ENCODE measurements at regions of chr6 and their contacts with region 1.

Region 1: GRCh38 chr6:129849456-129849855 is 11.7 kb downstream of the TMEM244 start:
- DNase-seq: no peak
- ATAC-seq: no peak
- H3K4me3 ChIP-seq: no peak overlapping the region
- H3K27ac ChIP-seq: no peak overlapping the region
- H3K4me1 ChIP-seq: no peaks in the 10 kb centered on the region
- H3K27me3 ChIP-seq: no peaks in the 10 kb centered on the region
- CTCF ChIP-seq: no peak
- POLR2A ChIP-seq: no peak

Region 2: GRCh38 chr6:129860908-129861665 is 11.6 kb after region 1 on chr6 and contains the start of gene TMEM244:
- in situ Hi-C with region 1: no loop called
- intact Hi-C with region 1: no loop called
- DNase-seq: no peak
- ATAC-seq: no peak
- H3K4me3 ChIP-seq: peak within 1 kb of the TSS; percentile 17 to 47 (median 29)
- H3K27ac ChIP-seq: no peak within 1 kb of the TSS
- H3K4me1 ChIP-seq: no peaks in the 10 kb centered on the region
- H3K27me3 ChIP-seq: no peaks in the 10 kb centered on the region
- CTCF ChIP-seq: no peak
- POLR2A ChIP-seq: no peak
- total RNA-seq, gene TMEM244: not detected

Region 3: DNA sequence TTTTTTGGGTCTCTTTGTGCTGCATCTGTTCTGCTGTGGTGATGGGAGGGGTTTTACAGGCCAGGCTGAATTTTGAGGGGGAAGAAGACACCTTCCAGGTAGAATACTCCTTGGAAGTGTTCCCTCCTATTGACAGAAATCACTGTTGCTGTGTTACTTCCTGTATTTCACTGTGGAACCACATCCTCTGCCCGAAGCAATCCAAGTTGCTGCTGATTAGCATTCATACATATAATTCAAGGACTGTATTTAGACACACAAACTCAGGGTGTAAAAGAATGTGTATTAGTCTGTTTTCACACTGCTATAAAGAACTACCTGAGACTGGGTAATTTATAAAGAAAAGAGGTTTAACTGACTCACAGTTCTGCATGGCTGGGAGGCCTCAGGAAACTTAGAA is 62.3 kb after region 1 on chr6:
- in situ Hi-C with region 1: no loop called
- intact Hi-C with region 1: loop called (anchors 2 kb)
- DNase-seq: no peak
- ATAC-seq: no peak
- H3K4me3 ChIP-seq: no peak overlapping the region
- H3K27ac ChIP-seq: no peak overlapping the region
- H3K4me1 ChIP-seq: no peaks in the 10 kb centered on the region
- H3K27me3 ChIP-seq: no peaks in the 10 kb centered on the region
- CTCF ChIP-seq: no peak
- POLR2A ChIP-seq: no peak